Left cardiac atrium (tissue), 4 donors: ENCODE measurements at regions of chr1 and their contacts with region 1.

Region 1: GRCh38 chr1:39973503-39974135 is 18.7 kb downstream of the MFSD2A start:
- DNase-seq: peak; percentile 76
- ATAC-seq: peak; percentile 83 to 89

Region 2: GRCh38 chr1:39926343-39926793 is 47.3 kb before region 1 on chr1:
- intact Hi-C with region 1: loop called (anchors 5 kb)
- DNase-seq: peak; percentile 55
- ATAC-seq: peak in 1 of 2 donors; percentile 31

Region 3: DNA sequence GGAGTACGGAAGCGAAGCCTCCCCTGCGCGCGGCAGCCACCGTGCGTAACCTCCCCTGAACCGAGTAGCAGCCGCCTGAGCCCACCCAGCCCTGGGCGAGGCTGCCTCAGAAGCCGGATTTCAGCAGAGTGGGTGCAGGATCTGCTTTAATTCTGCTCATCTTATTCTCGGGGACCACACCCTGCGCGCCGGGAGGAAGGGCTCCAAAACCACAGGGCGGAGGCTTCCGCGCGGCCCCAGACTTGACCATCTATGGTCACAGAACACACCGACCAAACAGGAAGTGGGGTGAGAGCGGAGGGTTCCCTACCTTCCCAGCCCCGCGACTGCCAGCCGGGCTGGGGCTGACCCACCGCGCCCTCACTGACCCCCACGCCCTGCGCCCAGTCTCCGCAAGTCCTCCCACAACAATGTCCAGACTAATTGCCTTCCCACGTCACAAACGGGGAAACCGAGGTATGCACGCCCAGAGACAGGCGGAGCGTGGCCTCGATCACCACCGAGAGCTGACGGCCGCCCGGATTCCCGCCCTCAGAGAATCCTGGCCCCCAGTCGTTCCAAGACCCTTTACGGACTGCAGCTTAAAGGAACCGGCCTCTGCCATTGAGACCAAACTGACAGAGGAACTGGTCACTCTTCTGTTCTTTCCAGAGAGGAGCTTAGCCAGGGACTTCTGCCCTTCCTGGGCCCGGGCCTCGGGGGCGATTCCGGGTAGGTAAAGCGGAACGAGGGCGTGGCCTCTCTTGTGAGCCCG is 66.3 kb after region 1 on chr1:
- intact Hi-C with region 1: loop called in 1 of 2 experiments (anchors 10 kb)
- DNase-seq: peak; percentile 94
- ATAC-seq: peak; percentile 76 to 83

Region 4: DNA sequence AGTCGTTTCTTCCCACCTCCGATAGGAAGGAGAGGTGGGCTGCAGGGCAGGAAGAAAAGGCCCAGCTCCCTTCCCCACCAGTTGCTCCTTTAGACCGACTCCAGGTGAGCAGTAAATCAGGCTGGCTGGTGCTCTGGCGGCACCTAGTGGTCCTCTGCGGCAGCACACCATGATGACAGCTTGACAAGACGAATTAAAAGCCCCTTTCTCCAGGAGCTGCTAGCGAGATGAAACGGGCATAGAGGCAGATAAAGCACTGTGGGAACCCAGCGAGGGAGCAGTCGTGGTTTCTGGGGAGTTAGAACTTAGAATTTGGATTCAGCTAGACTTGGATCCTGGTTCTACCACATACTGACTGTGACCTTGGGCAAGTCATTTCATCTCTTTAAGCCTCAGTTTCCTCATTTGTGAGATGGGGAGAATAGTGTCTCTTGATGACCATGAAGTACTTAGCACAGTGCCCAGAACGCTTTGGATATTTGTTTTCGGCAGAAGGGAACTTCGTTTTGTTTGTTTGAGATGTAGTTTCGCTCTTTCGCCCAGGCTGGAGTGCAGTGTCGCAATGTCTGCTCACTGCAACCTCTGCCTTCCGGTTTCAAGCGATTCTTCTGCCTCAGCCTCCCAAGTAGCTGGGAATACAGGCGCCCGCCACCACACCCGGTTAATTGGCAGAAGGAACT is 365.3 kb after region 1 on chr1:
- intact Hi-C with region 1: no loop called
- DNase-seq: peak; percentile 73
- ATAC-seq: peak; percentile 86 to 89